ENCODE measurements at regions of chr18 and their contacts with region 1.

Region 1: GRCh38 chr18:32470713-32471633 is at the start of gene GAREM1:
- DNase-seq: peak; percentile 96
- H3K4me3 ChIP-seq: peak within 1 kb of the TSS; percentile 68 to 69
- H3K27ac ChIP-seq: peak within 1 kb of the TSS; percentile 74 to 76
- H3K4me1 ChIP-seq: no peaks in the 10 kb centered on the region
- H3K27me3 ChIP-seq: no peaks in the 10 kb centered on the region
- CTCF ChIP-seq: peak; percentile 44 to 96 (median 68)
- POLR2A ChIP-seq: peak; percentile 95
- total RNA-seq, gene GAREM1: 9.5 to 14.9 TPM

Region 2: GRCh38 chr18:31750273-31750672 is 720.7 kb before region 1 on chr18:
- intact Hi-C with region 1: no loop called
- DNase-seq: no peak
- H3K4me3 ChIP-seq: no peak overlapping the region
- H3K27ac ChIP-seq: no peak overlapping the region
- H3K4me1 ChIP-seq: no peaks in the 10 kb centered on the region
- H3K27me3 ChIP-seq: no peaks in the 10 kb centered on the region
- CTCF ChIP-seq: no peak
- POLR2A ChIP-seq: no peak

Region 3: DNA sequence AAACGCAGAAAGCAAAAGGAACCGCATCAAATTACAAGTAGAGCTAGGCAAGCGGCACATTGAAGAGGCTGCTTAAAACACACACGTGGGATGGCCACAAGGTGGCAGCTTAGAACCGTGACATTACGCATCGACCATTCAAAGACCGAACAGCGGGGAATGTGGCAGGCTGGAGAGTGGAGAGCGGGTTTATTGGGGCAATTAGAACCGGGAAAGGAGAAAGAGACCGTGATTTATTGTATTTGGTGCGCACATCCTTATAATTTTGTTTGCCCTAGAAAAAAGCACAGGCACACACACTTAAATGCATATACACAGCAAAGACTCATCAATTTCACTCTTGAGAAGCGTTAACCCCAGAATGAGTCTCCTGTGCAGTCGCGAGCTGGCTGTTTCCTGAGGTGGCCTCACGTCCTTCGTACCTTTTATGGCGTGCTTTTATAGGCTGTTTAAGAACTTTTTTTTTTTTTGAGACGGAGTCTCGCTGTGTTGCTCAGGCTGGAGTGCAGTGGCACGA is 312.8 kb before region 1 on chr18:
- intact Hi-C with region 1: loop called (anchors 5 kb)
- DNase-seq: peak; percentile 84
- H3K4me3 ChIP-seq: peak overlapping the region in 1 of 2 donors; percentile 12
- H3K27ac ChIP-seq: no peak overlapping the region
- H3K4me1 ChIP-seq: no peaks in the 10 kb centered on the region
- H3K27me3 ChIP-seq: no peaks in the 10 kb centered on the region
- CTCF ChIP-seq: peak; percentile 42 to 93 (median 90)
- POLR2A ChIP-seq: no peak

Region 4: DNA sequence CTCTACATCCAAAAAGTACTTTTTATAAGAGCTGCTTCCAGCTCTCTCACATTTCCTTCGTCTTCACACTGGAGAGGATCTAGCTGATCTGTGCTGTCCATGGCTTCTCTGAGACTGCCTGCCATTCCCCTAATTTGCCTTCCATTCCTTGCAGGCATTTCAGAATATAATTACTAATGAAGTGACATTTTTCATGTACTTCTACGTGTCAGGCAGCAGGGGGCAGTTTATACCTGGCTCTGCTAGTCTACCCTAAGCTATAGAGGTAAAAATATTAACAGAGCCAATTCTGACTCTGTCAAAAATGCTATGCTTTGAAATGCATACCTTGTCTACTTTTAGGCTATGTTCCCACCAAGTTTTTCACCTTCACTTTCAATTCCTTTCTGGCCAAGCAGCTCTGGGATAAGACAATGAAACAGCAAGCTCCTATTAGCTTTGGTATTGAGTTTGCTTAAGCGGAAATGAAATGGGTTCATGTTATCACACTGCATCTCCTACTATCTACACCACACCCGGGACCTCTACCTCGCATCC is 199.2 kb before region 1 on chr18:
- intact Hi-C with region 1: loop called (anchors 2 kb)
- DNase-seq: peak; percentile 14
- H3K4me3 ChIP-seq: no peak overlapping the region
- H3K27ac ChIP-seq: no peak overlapping the region
- H3K4me1 ChIP-seq: no peaks in the 10 kb centered on the region
- H3K27me3 ChIP-seq: no peaks in the 10 kb centered on the region
- CTCF ChIP-seq: peak; percentile 18 to 81 (median 68)
- POLR2A ChIP-seq: no peak

Region 5: DNA sequence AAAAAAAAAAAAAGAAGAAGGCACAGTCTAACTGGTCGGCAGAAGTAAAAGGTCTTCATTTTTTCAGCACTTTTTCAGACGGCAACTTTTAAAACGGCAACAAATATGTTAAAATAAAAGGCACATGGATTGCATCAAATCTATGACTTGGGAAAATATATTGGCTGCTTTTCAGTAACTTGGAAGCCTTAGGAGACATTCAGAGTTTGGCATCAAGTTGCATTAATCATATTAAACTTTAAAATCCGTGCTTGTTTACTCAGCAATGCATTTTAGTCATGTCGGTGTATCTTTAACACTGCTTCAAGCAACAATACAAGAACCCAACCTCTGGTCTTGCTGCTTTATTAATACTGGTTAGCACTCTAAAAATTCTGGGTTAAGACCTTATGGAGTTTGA is 170.1 kb before region 1 on chr18:
- intact Hi-C with region 1: no loop called
- DNase-seq: no peak
- H3K4me3 ChIP-seq: no peak overlapping the region
- H3K27ac ChIP-seq: no peak overlapping the region
- H3K4me1 ChIP-seq: no peaks in the 10 kb centered on the region
- H3K27me3 ChIP-seq: no peaks in the 10 kb centered on the region
- CTCF ChIP-seq: no peak
- POLR2A ChIP-seq: no peak

Region 6: DNA sequence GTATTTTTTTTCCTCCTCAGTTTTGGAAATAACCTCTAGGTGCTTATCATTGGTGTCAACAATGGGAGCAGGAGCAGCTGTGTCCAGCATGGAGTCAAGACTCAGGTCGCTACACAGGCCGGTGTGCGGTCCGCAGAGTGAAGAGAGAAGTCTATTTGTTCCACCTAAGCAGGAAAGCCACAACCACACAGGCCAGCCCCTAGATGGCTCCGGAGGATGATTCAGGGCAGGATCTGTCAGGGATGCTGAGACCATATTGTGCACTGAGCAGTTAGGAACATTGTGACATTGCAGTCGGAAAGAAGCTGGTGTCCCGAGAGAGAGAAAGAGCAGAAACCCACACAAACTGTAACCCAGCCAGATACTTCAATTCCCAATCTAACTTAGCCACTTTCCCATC is 137.2 kb before region 1 on chr18:
- intact Hi-C with region 1: loop called (anchors 5 kb)
- DNase-seq: peak; percentile 11
- H3K4me3 ChIP-seq: no peak overlapping the region
- H3K27ac ChIP-seq: no peak overlapping the region
- H3K4me1 ChIP-seq: no peaks in the 10 kb centered on the region
- H3K27me3 ChIP-seq: no peaks in the 10 kb centered on the region
- CTCF ChIP-seq: peak in 2 of 4 experiments; percentile 18 to 29
- POLR2A ChIP-seq: no peak

Measured in prostate gland (tissue), 2 donors.